Endothelial cell of umbilical vein (primary cell): ENCODE measurements at regions of chr2 and their contacts with region 1.

Region 1: GRCh38 chr2:191218292-191218898 is 26.8 kb upstream of the MYO1B start:
- DNase-seq: peak; percentile 75
- H3K4me3 ChIP-seq: no peak overlapping the region
- H3K27ac ChIP-seq: no peak overlapping the region
- H3K4me1 ChIP-seq: no peaks in the 10 kb centered on the region
- H3K27me3 ChIP-seq: peaks cover 0 to 2% of the 10 kb centered on the region in 2 experiments
- CTCF ChIP-seq: peak; percentile 66 to 67
- POLR2A ChIP-seq: no peak

Region 2: GRCh38 chr2:191051825-191052778 is 166.3 kb before region 1 on chr2:
- CTCF ChIA-PET with region 1: interaction called, 25 read pairs
- POLR2A ChIA-PET with region 1: no interaction called
- dilution Hi-C with region 1: no loop called
- intact Hi-C with region 1: loop called (anchors 5 kb)
- DNase-seq: peak; percentile 75
- H3K4me3 ChIP-seq: no peak overlapping the region
- H3K27ac ChIP-seq: no peak overlapping the region
- H3K4me1 ChIP-seq: peaks cover 5% of the 10 kb centered on the region
- H3K27me3 ChIP-seq: peaks cover 4 to 8% of the 10 kb centered on the region in 2 experiments
- CTCF ChIP-seq: peak; percentile 27 to 38
- POLR2A ChIP-seq: no peak

Region 3: DNA sequence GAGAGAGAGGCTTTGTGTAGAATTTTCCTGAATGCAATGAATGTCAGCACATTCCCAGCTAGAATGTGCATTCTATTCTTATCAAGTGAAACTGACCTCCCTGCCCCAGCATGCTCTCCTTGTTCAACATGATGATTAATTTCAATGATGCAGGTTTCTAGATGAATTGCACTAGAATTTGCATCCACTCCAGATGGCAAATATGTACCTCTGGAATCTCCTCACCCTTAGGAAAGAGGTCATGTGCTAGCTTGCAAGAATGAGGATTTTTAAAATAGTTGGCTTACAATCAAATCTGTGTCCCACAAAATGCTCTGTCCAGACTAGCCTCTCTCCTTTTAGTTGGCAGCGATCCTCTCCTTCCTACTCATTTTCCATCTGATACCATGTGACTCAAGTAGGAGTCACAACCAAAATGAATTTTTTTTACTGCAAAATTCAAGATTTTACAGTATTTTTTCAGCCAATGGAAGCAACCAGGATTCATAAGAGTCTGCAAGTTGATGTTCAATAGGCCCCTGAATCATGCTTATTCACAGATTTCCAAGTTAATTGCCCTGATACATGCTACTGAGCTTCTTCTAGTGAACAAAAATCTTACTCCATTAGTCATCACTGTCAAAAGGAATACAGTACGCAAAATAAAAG is 46.6 kb before region 1 on chr2:
- CTCF ChIA-PET with region 1: interaction called, 67 read pairs
- POLR2A ChIA-PET with region 1: no interaction called
- dilution Hi-C with region 1: no loop called
- intact Hi-C with region 1: no loop called
- DNase-seq: peak; percentile 47
- H3K4me3 ChIP-seq: no peak overlapping the region
- H3K27ac ChIP-seq: no peak overlapping the region
- H3K4me1 ChIP-seq: peaks cover 9% of the 10 kb centered on the region
- H3K27me3 ChIP-seq: no peaks in the 10 kb centered on the region
- CTCF ChIP-seq: no peak
- POLR2A ChIP-seq: no peak

Region 4: DNA sequence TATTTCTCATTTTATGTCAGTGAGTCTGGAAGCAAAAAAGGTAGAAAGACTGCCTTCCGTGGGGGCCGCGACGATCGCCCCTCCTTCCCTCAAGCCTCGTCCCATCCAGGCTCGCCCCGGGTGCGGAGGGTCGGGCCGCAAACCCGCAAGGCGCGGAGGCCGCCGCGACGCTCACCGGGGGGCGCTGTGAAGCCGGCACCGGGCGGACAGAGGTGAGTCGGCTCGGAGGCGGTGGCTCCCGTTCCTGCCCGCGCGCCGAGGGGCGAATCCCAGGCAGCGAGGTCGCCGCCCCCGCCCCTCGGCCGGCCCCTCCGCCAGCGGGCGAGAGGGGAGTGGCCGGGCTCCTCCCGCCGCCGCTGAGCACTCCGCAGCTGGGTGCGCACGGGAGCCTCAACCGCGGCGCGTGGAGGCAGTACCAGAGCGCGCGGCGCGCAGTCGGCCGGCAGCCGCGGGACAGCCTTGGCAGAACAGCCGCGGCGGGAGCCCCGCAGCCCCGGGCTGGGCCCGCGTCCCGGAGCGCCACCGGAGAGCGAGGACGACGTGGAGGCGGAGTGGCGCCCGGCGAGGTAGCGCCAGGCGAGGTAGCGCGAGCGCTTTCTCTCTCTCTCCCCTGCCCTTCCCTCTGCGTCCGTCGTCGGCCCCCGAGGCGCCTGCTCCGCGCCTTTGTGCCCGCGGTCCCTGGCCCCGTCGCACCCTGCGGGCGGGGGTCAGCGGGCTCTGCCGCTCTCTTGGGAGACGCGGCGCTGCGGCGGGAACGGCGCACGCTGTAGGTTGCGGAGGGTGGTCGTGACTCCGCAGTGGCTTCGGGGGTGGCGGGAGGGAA is 26.9 kb after region 1 on chr2 and contains the start of gene MYO1B:
- CTCF ChIA-PET with region 1: interaction called, 8 read pairs
- POLR2A ChIA-PET with region 1: no interaction called
- dilution Hi-C with region 1: no loop called
- intact Hi-C with region 1: loop called (anchors 1 kb)
- DNase-seq: peak; percentile 68
- H3K4me3 ChIP-seq: peak within 1 kb of the TSS; percentile 56 to 78 (median 78)
- H3K27ac ChIP-seq: peak within 1 kb of the TSS; percentile 85
- H3K4me1 ChIP-seq: peaks cover 21% of the 10 kb centered on the region
- H3K27me3 ChIP-seq: no peaks in the 10 kb centered on the region
- CTCF ChIP-seq: peak; percentile 57
- POLR2A ChIP-seq: peak; percentile 57
- total RNA-seq, gene MYO1B: 51.1 and 55.4 TPM in 2 replicates

Region 5: DNA sequence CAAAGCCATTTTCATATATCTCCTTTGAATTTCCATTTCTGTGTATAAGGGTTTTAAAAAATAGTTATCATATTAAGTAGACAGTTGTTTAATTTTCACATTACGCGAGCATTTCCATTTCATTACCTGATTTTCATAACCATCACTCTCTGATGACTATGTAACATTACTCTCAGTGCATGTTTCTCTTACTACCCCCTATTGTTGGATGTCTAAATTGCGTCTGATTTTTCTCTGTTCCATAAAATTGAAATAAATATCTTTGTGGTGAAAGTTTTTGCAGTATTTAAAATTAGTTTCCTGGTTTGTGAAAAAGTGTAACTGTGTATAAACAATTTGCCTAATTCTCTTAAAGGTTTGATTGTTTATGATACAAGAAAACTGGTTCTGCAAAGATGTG is 150.6 kb after region 1 on chr2:
- CTCF ChIA-PET with region 1: interaction called, 3 read pairs
- POLR2A ChIA-PET with region 1: no interaction called
- dilution Hi-C with region 1: no loop called
- intact Hi-C with region 1: loop called (anchors 5 kb)
- DNase-seq: peak; percentile 13
- H3K4me3 ChIP-seq: no peak overlapping the region
- H3K27ac ChIP-seq: no peak overlapping the region
- H3K4me1 ChIP-seq: no peaks in the 10 kb centered on the region
- H3K27me3 ChIP-seq: no peaks in the 10 kb centered on the region
- CTCF ChIP-seq: peak in 1 of 2 donors; percentile 17
- POLR2A ChIP-seq: no peak

Region 6: GRCh38 chr2:191501561-191502168 is 283.3 kb after region 1 on chr2:
- CTCF ChIA-PET with region 1: interaction called, 149 read pairs
- POLR2A ChIA-PET with region 1: no interaction called
- dilution Hi-C with region 1: no loop called
- intact Hi-C with region 1: loop called (anchors 1 kb)
- DNase-seq: peak; percentile 59
- H3K4me3 ChIP-seq: no peak overlapping the region
- H3K27ac ChIP-seq: no peak overlapping the region
- H3K4me1 ChIP-seq: no peaks in the 10 kb centered on the region
- H3K27me3 ChIP-seq: no peaks in the 10 kb centered on the region
- CTCF ChIP-seq: peak; percentile 16 to 21
- POLR2A ChIP-seq: no peak

Region 7: DNA sequence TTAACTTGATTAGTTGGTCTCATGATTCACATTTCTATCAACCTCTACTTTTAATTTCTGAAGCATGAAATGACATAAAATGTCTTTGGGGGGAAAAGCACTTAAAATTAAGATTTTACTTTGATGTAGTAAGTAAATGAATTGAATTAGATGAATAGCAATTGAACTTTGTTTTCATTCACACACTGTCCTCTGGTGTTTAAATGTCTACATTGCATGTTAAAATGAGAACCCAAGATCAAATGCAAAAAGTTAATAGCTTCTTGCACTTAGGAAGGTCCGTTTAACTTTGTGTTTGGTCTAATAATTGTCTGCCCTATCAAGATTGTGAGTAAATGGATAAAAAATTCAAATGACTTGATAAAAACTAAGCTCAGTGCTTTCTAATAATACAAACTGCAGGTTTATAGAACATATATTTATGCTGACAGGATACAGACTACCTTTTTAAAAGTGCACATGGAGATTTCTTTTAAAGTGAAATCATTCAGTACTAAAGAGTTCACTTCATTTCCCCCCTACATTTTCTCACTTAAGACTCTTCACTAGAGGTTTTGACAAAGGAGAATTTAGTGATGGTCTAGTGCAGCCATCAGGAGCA is 303.3 kb after region 1 on chr2:
- CTCF ChIA-PET with region 1: interaction called, 138 read pairs
- POLR2A ChIA-PET with region 1: no interaction called
- dilution Hi-C with region 1: no loop called
- intact Hi-C with region 1: loop called (anchors 1 kb)
- DNase-seq: peak; percentile 56
- H3K4me3 ChIP-seq: no peak overlapping the region
- H3K27ac ChIP-seq: no peak overlapping the region
- H3K4me1 ChIP-seq: no peaks in the 10 kb centered on the region
- H3K27me3 ChIP-seq: peaks cover 5 to 12% of the 10 kb centered on the region in 2 experiments
- CTCF ChIP-seq: peak; percentile 36 to 49
- POLR2A ChIP-seq: no peak